ENCODE measurements at regions of chr4 and their contacts with region 1.

Region 1: DNA sequence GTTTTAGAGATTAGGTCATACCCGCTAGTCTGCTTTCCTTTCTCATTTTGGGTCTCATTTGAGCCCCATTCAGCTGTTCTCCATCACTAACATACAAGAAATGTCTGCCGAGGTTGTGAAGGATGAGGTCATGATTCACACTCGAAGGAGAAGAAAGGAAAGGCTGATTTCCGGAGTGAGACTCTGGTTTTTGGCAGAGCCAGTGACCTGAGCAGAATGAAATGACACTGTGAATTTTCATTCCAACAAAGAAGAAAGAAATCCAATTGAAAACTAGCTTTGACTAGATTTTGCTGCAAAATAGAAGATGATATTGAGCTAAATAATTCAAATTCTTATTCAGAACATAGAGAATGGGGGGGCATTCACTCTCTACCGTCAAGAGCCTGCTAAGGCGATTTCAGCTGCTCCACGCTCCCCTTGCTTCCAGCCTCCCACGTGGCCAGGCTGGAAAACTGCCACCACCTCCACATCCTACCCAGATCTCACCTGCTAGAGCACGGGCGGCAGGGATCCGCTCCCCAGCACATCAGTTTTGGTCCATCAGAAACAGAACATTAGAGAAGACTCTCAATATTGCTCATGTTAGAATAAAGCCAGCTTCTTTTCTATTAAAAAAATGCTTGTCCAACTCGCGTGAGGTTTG is 39.0 kb downstream of the F11 start:
- DNase-seq: no peak
- ATAC-seq: no peak
- H3K4me3 ChIP-seq: no peak overlapping the region
- H3K27ac ChIP-seq: no peak overlapping the region
- H3K4me1 ChIP-seq: no peaks in the 10 kb centered on the region
- H3K27me3 ChIP-seq: no peaks in the 10 kb centered on the region
- CTCF ChIP-seq: no peak
- POLR2A ChIP-seq: no peak

Region 2: GRCh38 chr4:186216465-186217024 is 88.4 kb before region 1 on chr4:
- intact Hi-C with region 1: no loop called
- DNase-seq: no peak
- ATAC-seq: peak in 1 of 4 donors; percentile 11
- H3K4me3 ChIP-seq: no peak overlapping the region
- H3K27ac ChIP-seq: no peak overlapping the region
- H3K4me1 ChIP-seq: peaks cover 0 to 15% (median 0%) of the 10 kb centered on the region in 4 donors
- H3K27me3 ChIP-seq: no peaks in the 10 kb centered on the region
- CTCF ChIP-seq: no peak
- POLR2A ChIP-seq: no peak

Region 3: DNA sequence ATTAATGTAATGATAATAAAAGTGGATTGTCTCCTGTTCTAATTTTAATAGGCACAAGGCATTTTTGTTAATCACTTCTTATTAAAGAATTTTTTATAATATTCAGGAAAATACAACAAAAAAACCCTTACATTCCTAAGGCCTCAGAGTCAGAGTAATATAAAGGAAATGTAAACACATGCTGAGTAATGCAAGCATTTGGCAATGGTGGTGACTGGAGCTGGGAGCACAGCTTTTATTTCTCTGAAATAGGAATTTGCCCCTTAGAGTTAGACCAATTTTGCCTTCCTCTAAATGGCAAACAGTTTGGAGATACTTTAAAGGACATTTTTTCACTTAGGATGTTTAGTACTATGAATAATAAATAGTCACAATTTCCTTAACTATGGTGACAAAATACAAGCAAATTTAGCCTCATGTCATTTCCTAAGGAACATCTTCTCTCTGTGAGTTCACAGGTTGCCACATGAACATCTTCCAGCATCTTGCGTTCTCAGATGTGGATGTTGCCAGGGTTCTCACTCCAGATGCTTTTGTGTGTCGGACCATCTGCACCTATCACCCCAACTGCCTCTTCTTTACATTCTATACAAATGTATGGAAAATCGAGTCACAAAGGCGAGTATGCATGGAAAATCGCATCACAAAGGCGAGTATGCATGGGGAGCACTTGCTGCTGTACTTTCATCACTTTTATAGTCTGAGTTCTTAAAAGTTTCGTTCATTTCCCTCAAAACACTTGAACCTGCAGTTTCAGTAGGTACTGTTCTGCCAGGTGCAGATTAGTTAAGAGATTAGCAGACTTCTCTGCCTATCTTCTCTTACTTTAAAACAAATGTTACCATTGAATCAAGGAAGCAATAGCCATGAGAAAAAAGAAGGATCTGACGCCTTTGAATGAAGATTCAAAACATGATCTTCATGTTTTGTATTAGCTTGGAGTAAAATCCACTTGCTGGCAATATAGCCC is 54.9 kb before region 1 on chr4:
- intact Hi-C with region 1: no loop called
- DNase-seq: no peak
- ATAC-seq: peak in 2 of 4 donors; percentile 35 to 64
- H3K4me3 ChIP-seq: no peak overlapping the region
- H3K27ac ChIP-seq: peak overlapping the region in 2 of 3 donors; percentile 42 to 56
- H3K4me1 ChIP-seq: peaks cover 0 to 26% (median 3%) of the 10 kb centered on the region in 4 donors
- H3K27me3 ChIP-seq: no peaks in the 10 kb centered on the region
- CTCF ChIP-seq: no peak
- POLR2A ChIP-seq: no peak

Region 4: DNA sequence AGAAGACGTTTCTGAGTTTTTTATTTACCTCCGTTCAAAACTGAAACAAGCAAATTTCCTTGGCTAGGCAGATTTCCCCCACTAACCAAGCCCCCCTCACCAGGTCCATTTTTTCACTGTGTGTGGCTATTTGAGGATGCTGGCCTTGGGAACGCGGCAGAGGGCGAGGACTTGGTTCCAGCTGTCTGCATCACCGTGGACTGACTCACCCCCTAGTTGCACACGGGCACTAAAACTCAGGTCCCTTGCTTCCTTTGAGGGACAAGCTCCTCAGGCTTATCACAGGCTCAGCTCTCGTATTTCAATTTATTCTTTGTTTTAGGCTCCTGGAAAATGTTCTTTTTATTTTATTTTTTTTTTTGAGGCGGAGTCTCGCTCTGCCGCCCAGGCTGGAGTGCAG is 258.8 kb after region 1 on chr4:
- intact Hi-C with region 1: loop called in 1 of 2 experiments (anchors 10 kb)
- DNase-seq: no peak
- ATAC-seq: no peak
- H3K4me3 ChIP-seq: no peak overlapping the region
- H3K27ac ChIP-seq: no peak overlapping the region
- H3K4me1 ChIP-seq: no peaks in the 10 kb centered on the region
- H3K27me3 ChIP-seq: no peaks in the 10 kb centered on the region
- CTCF ChIP-seq: no peak
- POLR2A ChIP-seq: no peak